ENCODE measurements at regions of chr5 and their contacts with region 1.

Region 1: GRCh38 chr5:141524604-141525597 is 36.0 kb downstream of the PCDHGC5 start:
- DNase-seq: peak; percentile 67 to 97 (median 80)

Region 2: GRCh38 chr5:141419074-141419880 is 105.6 kb before region 1 on chr5:
- intact Hi-C with region 1: loop called (anchors 5 kb)
- DNase-seq: peak in 2 of 10 donors; percentile 68 to 76

Region 3: DNA sequence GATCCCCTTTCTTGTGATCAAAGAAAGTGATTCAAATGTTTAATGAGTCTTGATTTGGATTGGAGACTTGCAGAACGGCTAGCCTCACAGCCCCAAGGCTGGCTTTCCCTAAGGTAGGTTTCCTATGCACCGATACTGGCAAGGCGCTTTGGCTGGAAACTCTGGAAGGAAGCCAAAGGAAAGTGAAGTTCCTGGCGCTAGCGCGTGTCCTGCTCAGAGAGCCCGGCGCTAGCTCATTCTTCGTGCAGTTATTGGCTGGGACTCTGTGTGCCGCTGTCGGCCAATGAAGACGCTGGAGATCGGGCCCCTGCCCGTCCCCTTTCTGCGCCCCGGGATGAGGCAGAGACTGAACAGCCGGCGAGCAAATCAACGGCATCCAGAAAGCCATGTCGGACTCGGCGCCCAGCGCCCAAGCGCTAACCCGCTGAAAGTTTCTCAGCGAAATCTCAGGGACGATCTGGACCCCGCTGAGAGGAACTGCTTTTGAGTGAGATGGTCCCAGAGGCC is 49.2 kb before region 1 on chr5 and contains the start of gene PCDHGC3:
- intact Hi-C with region 1: loop called (anchors 2 kb)
- DNase-seq: peak; percentile 67 to 98 (median 88)

Measured in posterior cingulate gyrus (tissue), 11 donors.